ENCODE measurements at regions of chr1 and their contacts with region 1.

Region 1: GRCh38 chr1:156129706-156130581 is 15.4 kb downstream of the LMNA start:
- DNase-seq: peak; percentile 77
- ATAC-seq: peak; percentile 53
- H3K4me3 Mint-ChIP-seq: no peak overlapping the region
- H3K27ac Mint-ChIP-seq: no peak overlapping the region
- H3K4me1 Mint-ChIP-seq: peaks cover 28% of the 10 kb centered on the region
- H3K27me3 Mint-ChIP-seq: peaks cover 2% of the 10 kb centered on the region
- CTCF ChIP-seq: peak; percentile 71

Region 2: DNA sequence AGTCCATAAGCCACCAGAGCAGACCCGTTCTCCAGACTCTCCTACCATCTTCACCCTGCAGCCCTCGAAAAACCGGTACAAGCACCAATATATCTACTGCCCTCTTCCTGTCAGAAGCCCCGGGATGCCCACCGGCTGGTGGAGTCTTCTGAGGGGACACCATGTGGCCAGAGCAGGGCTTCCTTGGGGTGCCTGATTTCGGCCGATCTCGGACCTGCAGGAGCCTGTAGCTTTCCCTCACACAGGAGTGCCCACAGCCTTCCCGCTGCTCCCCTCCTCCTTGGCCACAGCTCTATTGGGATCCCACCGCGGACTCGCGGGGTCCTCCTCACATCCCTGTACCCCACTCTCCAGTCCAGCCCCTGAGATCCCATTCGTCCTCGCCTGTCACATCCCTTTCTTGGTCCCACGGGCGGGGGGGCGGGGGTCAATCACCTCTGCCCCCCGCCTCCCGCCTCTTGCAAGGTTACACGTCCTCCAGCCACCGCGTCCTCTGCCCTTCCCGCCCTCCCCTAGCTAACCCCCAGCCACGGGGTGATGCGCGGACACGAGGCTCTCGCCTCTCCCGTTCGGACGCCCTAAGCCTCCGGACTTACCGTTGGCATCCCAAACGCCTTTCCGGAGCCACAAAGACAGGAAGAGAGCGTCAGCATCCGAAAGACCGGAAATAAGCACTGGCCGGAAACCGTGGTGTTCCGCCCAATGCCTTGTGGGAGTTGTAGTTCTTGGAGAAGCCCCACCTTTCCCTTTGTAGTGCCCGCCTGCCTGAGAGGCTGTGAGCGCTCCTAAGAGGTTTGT is 109.5 kb before region 1 on chr1 and contains the start of gene SSR2:
- CTCF ChIA-PET with region 1: no interaction called
- POLR2A ChIA-PET with region 1: no interaction called
- intact Hi-C with region 1: no loop called
- DNase-seq: peak; percentile 65
- ATAC-seq: peak; percentile 99
- H3K4me3 Mint-ChIP-seq: peak within 1 kb of the TSS; percentile 98
- H3K27ac Mint-ChIP-seq: peak within 1 kb of the TSS; percentile 93
- H3K4me1 Mint-ChIP-seq: peaks cover 22% of the 10 kb centered on the region
- H3K27me3 Mint-ChIP-seq: peaks cover 5% of the 10 kb centered on the region
- CTCF ChIP-seq: no peak
- total RNA-seq, gene SSR2: 136 and 146 TPM in 2 replicates

Region 3: GRCh38 chr1:156090822-156091188 is 39.1 kb before region 1 on chr1:
- CTCF ChIA-PET with region 1: interaction called, 422 read pairs
- POLR2A ChIA-PET with region 1: interaction called, 154 read pairs
- intact Hi-C with region 1: loop called (anchors 1 kb)
- DNase-seq: peak; percentile 81
- ATAC-seq: peak; percentile 92
- H3K4me3 Mint-ChIP-seq: no peak overlapping the region
- H3K27ac Mint-ChIP-seq: peak overlapping the region; percentile 48
- H3K4me1 Mint-ChIP-seq: peaks cover 9% of the 10 kb centered on the region
- H3K27me3 Mint-ChIP-seq: peaks cover 8% of the 10 kb centered on the region
- CTCF ChIP-seq: peak; percentile 62

Region 4: GRCh38 chr1:156114101-156114916 is 15.6 kb before region 1 on chr1 and contains the start of gene LMNA:
- CTCF ChIA-PET with region 1: interaction called, 16 read pairs
- POLR2A ChIA-PET with region 1: interaction called, 22 read pairs
- intact Hi-C with region 1: loop called (anchors 1 kb)
- DNase-seq: peak; percentile 65
- ATAC-seq: peak; percentile 84
- H3K4me3 Mint-ChIP-seq: peak within 1 kb of the TSS; percentile 86
- H3K27ac Mint-ChIP-seq: peak within 1 kb of the TSS; percentile 77
- H3K4me1 Mint-ChIP-seq: peaks cover 33% of the 10 kb centered on the region
- H3K27me3 Mint-ChIP-seq: peaks cover 13% of the 10 kb centered on the region
- CTCF ChIP-seq: no peak
- total RNA-seq, gene LMNA: 40.4 and 47.5 TPM in 2 replicates